Activated T-helper 2 cell treated with anti-CD3 and anti-CD28 coated beads, Interferon-gamma antibody, Interleukin-2, Interleukin-4, amounts not matched to agents 10 μg/mL and 5 μg/mL and 100 μg/mL, durations not matched to agents 14 hours and 24 hours and 36 hours (primary cell): ENCODE measurements at regions of chr4 and their contacts with region 1.

Region 1: GRCh38 chr4:152385551-152385950 is 150.3 kb downstream of the FBXW7 start:
- DNase-seq: no peak
- H3K4me3 Mint-ChIP-seq: no peak overlapping the region
- H3K27ac Mint-ChIP-seq: no peak overlapping the region
- H3K4me1 Mint-ChIP-seq: peaks cover 15% of the 10 kb centered on the region
- H3K27me3 Mint-ChIP-seq: no peaks in the 10 kb centered on the region

Region 2: DNA sequence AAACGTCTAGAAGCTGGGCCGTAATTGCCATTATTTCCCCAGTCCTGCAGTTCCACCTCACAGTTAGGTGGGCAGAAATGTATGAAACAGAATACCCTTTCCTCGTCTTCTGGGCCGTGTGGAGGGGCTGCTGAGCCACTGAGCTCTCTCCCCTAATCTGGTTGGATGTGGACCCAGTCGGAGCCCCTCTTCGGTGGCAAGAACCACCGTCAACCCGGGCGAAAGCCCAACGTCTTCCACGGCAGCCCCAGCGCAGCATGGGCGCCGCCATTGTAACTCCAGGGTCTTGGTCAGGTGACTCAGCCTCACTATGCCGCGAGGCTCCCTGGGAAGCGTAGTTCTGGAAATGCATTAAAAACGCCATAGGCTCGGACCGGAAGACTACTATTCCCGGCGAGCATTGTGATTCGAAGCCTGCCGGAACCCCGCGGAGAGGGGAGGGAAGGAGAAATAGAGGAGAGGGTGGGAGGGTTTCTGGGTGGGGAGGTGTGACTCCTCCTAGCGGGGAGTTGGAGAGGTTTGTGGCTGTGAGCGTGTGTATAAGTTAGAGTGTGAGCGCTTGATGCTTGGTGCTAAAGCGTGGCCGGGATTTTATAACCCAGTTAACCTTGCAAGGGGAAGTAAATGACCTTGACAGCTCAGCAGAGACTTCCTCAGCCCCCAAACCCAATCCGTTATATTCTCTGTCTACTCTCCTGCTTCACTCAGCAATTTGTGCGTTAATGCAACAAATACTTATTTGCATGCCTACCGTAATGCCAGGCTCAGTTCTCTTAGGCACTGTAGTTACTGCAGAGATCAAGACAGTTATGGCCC is 624.6 kb before region 1 on chr4 and contains the start of gene GATB:
- intact Hi-C with region 1: loop called (anchors 10 kb)
- DNase-seq: peak; percentile 88
- H3K4me3 Mint-ChIP-seq: peak within 1 kb of the TSS; percentile 100
- H3K27ac Mint-ChIP-seq: peak within 1 kb of the TSS; percentile 99
- H3K4me1 Mint-ChIP-seq: peaks cover 12% of the 10 kb centered on the region
- H3K27me3 Mint-ChIP-seq: peaks cover 2% of the 10 kb centered on the region
- total RNA-seq, gene GATB: 17.7 and 19.6 TPM in 2 replicates